Transverse colon (tissue), 4 donors: ENCODE measurements at regions of chr4 and their contacts with region 1.

Region 1: GRCh38 chr4:97525236-97525635 is 618.0 kb downstream of the STPG2 start:
- DNase-seq: no peak
- H3K4me3 ChIP-seq: no peak overlapping the region
- H3K27ac ChIP-seq: no peak overlapping the region
- H3K4me1 ChIP-seq: no peaks in the 10 kb centered on the region
- H3K27me3 ChIP-seq: no peaks in the 10 kb centered on the region
- CTCF ChIP-seq: no peak
- EP300 ChIP-seq: no peak
- POLR2A ChIP-seq: no peak

Region 2: DNA sequence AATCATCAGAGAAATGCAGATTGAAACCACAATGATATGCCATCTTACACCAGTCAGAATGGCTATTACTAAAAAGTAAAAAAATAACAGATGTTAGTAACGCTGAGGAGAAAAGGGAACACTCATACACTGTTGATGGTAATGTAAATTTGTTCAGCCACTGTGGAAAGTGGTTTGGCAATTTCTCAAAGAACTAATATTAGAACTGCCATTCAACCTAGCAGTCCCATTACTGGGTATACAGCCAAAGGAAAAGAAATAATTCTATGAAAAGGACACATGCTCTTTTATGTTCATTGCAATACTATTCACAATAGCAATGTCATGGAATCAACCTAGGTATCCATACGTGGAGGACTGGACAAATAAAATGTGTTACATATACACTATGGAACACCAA is 51.8 kb after region 1 on chr4:
- in situ Hi-C with region 1: no loop called
- intact Hi-C with region 1: loop called (anchors 2 kb)
- DNase-seq: no peak
- H3K4me3 ChIP-seq: no peak overlapping the region
- H3K27ac ChIP-seq: no peak overlapping the region
- H3K4me1 ChIP-seq: no peaks in the 10 kb centered on the region
- H3K27me3 ChIP-seq: no peaks in the 10 kb centered on the region
- CTCF ChIP-seq: no peak
- EP300 ChIP-seq: no peak
- POLR2A ChIP-seq: no peak

Region 3: DNA sequence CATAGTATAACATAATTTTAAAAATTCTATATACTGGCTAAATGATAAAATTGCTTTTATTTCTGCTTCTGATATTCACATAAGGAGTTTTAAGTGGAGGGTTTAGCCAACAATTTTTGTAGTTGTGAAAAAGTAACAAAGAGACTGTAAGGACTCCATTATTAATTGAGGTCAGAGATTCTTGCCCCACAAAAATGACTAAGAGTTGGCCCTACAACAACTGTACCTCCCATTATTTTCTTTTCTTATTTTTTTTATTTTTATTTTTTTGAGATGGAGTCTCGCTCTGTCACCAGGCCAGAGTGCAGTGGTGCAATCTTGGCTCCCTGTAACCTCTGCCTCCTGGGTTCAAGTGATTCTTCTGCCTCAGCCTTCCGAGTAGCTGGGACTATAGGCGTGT is 1805.4 kb after region 1 on chr4:
- in situ Hi-C with region 1: no loop called
- intact Hi-C with region 1: no loop called
- DNase-seq: no peak
- H3K4me3 ChIP-seq: no peak overlapping the region
- H3K27ac ChIP-seq: peak overlapping the region in 1 of 4 donors; percentile 12
- H3K4me1 ChIP-seq: no peaks in the 10 kb centered on the region
- H3K27me3 ChIP-seq: no peaks in the 10 kb centered on the region
- CTCF ChIP-seq: no peak
- EP300 ChIP-seq: no peak
- POLR2A ChIP-seq: no peak